T-cell (primary cell): ENCODE measurements at regions of chr20 and their contacts with region 1.

Region 1: GRCh38 chr20:9723501-9724202 is 115.2 kb downstream of the PAK5 start:
- DNase-seq: no peak
- ATAC-seq: no peak
- H3K4me3 ChIP-seq: no peak overlapping the region
- H3K4me3 Mint-ChIP-seq: no peak overlapping the region
- H3K27ac ChIP-seq: no peak overlapping the region
- H3K27ac Mint-ChIP-seq: no peak overlapping the region
- H3K4me1 ChIP-seq: no peaks in the 10 kb centered on the region
- H3K4me1 Mint-ChIP-seq: no peaks in the 10 kb centered on the region
- H3K27me3 ChIP-seq: no peaks in the 10 kb centered on the region
- H3K27me3 Mint-ChIP-seq: no peaks in the 10 kb centered on the region

Region 2: DNA sequence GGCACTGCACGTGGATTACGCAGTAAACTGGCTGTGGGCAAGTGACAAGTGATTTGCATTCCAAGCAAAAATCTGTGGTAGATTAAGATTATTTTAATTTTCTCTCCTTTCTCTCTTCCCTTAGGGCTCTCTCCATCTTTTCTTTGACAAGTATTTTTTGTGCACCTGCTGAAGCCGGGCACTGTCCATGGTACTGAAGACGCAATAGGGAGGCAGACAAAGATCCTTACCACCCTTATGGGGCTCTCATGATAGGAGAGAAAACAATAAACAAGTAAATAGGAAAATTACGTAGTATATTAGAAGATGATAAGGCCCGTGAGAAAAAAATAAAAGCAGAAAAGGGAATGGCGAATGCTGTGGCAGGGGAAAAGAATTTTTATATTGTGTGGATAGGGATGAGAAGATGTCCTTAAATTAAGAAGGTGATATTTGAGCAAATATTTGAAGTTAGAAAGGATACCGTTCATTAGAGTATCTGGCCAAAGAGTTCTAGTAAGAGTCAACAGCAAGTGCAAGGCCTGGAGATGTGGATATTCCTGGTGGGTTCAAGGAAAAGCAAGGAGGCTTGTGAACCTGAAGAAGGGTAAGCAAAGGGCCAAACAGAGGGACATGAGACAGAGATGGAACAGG is 63.3 kb before region 1 on chr20:
- CTCF ChIA-PET with region 1: no interaction called
- POLR2A ChIA-PET with region 1: interaction called in 1 of 2 experiments, 10 read pairs
- DNase-seq: no peak
- ATAC-seq: no peak
- H3K4me3 ChIP-seq: no peak overlapping the region
- H3K4me3 Mint-ChIP-seq: no peak overlapping the region
- H3K27ac ChIP-seq: no peak overlapping the region
- H3K27ac Mint-ChIP-seq: no peak overlapping the region
- H3K4me1 ChIP-seq: no peaks in the 10 kb centered on the region
- H3K4me1 Mint-ChIP-seq: no peaks in the 10 kb centered on the region
- H3K27me3 ChIP-seq: no peaks in the 10 kb centered on the region
- H3K27me3 Mint-ChIP-seq: no peaks in the 10 kb centered on the region